ENCODE measurements at regions of chr6 and their contacts with region 1.

Region 1: GRCh38 chr6:100001915-100002388 is 7.9 kb upstream of the MCHR2 start:
- DNase-seq: peak; percentile 24
- ATAC-seq: peak; percentile 91
- H3K4me3 ChIP-seq: no peak overlapping the region
- H3K27ac ChIP-seq: no peak overlapping the region
- H3K4me1 ChIP-seq: no peaks in the 10 kb centered on the region
- H3K27me3 ChIP-seq: no peaks in the 10 kb centered on the region
- CTCF ChIP-seq: peak; percentile 81
- EP300 ChIP-seq: no peak
- POLR2A ChIP-seq: no peak
- RAD21 ChIP-seq: 0 out of 2 replicates have a peak, but pooled peaks have one; percentile 38

Region 2: GRCh38 chr6:100099189-100100074 is 97.5 kb after region 1 on chr6:
- CTCF ChIA-PET with region 1: interaction called, 12 read pairs
- POLR2A ChIA-PET with region 1: no interaction called
- in situ Hi-C with region 1: no loop called
- intact Hi-C with region 1: loop called (anchors 1 kb)
- DNase-seq: peak; percentile 27
- ATAC-seq: peak; percentile 51; the same call in 2 of the 3 replicates
- H3K4me3 ChIP-seq: no peak overlapping the region
- H3K27ac ChIP-seq: no peak overlapping the region
- H3K4me1 ChIP-seq: no peaks in the 10 kb centered on the region
- H3K27me3 ChIP-seq: no peaks in the 10 kb centered on the region
- CTCF ChIP-seq: peak; percentile 48; the same call in 1 of the 2 replicates
- EP300 ChIP-seq: no peak
- POLR2A ChIP-seq: no peak
- RAD21 ChIP-seq: no peak

Measured in HepG2 (cell line).